H1 (cell line): ENCODE measurements at regions of chr15 and their contacts with region 1.

Region 1: GRCh38 chr15:66630801-66631351 is 65.1 kb upstream of the LCTL start:
- DNase-seq: no peak
- H3K4me3 ChIP-seq: no peak overlapping the region
- H3K27ac ChIP-seq: no peak overlapping the region
- H3K4me1 ChIP-seq: peaks cover 8 to 22% (median 14%) of the 10 kb centered on the region in 4 experiments
- H3K27me3 ChIP-seq: no peaks in the 10 kb centered on the region
- CTCF ChIP-seq: no peak
- EP300 ChIP-seq: no peak
- POLR2A ChIP-seq: no peak
- RAD21 ChIP-seq: no peak

Region 2: GRCh38 chr15:66524838-66525237 is 106.0 kb before region 1 on chr15:
- CTCF ChIA-PET with region 1: no interaction called
- POLR2A ChIA-PET with region 1: no interaction called
- DNase-seq: no peak
- H3K4me3 ChIP-seq: no peak overlapping the region
- H3K27ac ChIP-seq: no peak overlapping the region
- H3K4me1 ChIP-seq: no peaks in the 10 kb centered on the region
- H3K27me3 ChIP-seq: no peaks in the 10 kb centered on the region
- CTCF ChIP-seq: no peak
- EP300 ChIP-seq: no peak
- POLR2A ChIP-seq: no peak
- RAD21 ChIP-seq: no peak

Region 3: GRCh38 chr15:66641485-66642315 is 10.8 kb after region 1 on chr15:
- CTCF ChIA-PET with region 1: interaction called, 45 read pairs
- POLR2A ChIA-PET with region 1: interaction called, 8 read pairs
- DNase-seq: no peak
- H3K4me3 ChIP-seq: no peak overlapping the region
- H3K27ac ChIP-seq: no peak overlapping the region
- H3K4me1 ChIP-seq: peaks cover 0 to 3% (median 0%) of the 10 kb centered on the region in 4 experiments; a peak in 4 of 7 replicates
- H3K27me3 ChIP-seq: no peaks in the 10 kb centered on the region
- CTCF ChIP-seq: no peak
- EP300 ChIP-seq: no peak
- POLR2A ChIP-seq: no peak
- RAD21 ChIP-seq: no peak

Region 4: DNA sequence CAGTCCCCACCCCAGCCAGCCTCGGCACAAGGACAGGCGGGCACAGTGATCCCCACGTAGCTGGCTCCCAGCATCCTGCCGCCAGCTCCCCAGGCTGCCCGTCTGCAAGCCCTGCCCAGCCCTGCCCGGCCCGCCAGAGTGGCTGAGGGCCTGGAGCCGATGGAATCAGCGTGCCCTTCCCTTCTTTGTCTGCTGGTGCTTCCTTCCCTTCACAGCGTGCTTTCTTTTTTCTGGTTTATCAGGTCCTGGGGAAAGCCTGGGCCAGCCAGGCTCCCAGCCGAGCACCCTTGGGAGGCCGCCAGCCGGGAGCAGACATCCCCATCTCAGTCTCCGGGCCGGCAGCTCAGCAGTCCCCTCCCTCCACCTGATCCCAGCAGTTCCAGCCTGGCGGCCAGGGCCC is 16.5 kb after region 1 on chr15:
- CTCF ChIA-PET with region 1: interaction called, 45 read pairs
- POLR2A ChIA-PET with region 1: interaction called, 8 read pairs
- DNase-seq: no peak
- H3K4me3 ChIP-seq: no peak overlapping the region
- H3K27ac ChIP-seq: no peak overlapping the region
- H3K4me1 ChIP-seq: peaks cover 0 to 3% (median 0%) of the 10 kb centered on the region in 4 experiments; a peak in 2 of 7 replicates
- H3K27me3 ChIP-seq: no peaks in the 10 kb centered on the region
- CTCF ChIP-seq: no peak
- EP300 ChIP-seq: no peak
- POLR2A ChIP-seq: no peak
- RAD21 ChIP-seq: no peak